Aorta (tissue), 5 donors: ENCODE measurements at regions of chr10 and their contacts with region 1.

Region 1: GRCh38 chr10:22988581-22989360 is 60.9 kb downstream of the ARMC3 start:
- DNase-seq: peak in 1 of 2 donors; percentile 46
- ATAC-seq: peak; percentile 88
- H3K4me3 ChIP-seq: no peak overlapping the region
- H3K27ac ChIP-seq: no peak overlapping the region
- H3K4me1 ChIP-seq: no peaks in the 10 kb centered on the region
- H3K27me3 ChIP-seq: peaks cover 0 to 1% of the 10 kb centered on the region in 2 donors

Region 2: GRCh38 chr10:22010973-22011408 is 977.8 kb before region 1 on chr10:
- intact Hi-C with region 1: loop called in 1 of 2 experiments (anchors 5 kb)
- DNase-seq: no peak
- ATAC-seq: no peak
- H3K4me3 ChIP-seq: no peak overlapping the region
- H3K27ac ChIP-seq: no peak overlapping the region
- H3K4me1 ChIP-seq: no peaks in the 10 kb centered on the region
- H3K27me3 ChIP-seq: no peaks in the 10 kb centered on the region

Region 3: DNA sequence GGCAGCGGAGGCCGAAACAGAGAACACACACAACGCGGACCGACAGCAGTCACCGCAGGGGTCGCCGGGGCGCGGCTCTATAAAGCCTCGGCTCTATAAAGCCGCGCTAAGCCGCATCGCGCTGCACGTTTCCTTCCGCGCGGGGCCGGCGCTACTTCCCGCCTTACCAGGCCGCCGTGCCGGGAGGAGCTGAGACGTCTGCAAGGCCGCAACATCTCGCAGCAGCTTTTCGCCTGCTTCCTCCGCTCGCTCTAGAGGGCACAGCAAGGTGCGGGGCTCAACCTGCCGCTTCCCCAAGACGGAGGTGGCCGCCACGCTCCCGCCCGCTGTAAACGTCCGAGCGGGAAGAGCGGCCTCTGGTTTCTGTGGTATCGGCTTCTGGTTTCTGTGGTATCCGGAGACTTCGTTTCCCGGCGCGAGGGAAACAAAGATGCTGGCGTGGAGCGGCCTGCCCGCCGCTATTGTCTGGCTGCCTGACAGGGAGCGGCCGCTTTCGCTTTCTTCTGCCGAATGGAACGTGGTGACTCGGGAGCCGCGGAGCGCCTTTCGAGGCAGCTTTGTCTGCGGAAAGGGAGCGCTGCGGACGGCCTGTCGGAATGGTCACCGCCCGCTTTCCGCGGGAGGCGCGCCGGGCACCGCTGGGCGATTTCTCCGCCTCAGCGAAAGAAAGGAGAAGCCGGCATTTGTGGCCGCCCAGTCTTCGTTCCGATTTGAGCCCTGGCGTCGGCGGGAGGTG is 551.7 kb before region 1 on chr10:
- intact Hi-C with region 1: loop called (anchors 10 kb)
- DNase-seq: peak; percentile 95 to 96
- ATAC-seq: peak; percentile 96
- H3K4me3 ChIP-seq: peak overlapping the region; percentile 78 to 81
- H3K27ac ChIP-seq: peak overlapping the region; percentile 68 to 85
- H3K4me1 ChIP-seq: no peaks in the 10 kb centered on the region
- H3K27me3 ChIP-seq: no peaks in the 10 kb centered on the region

Region 4: DNA sequence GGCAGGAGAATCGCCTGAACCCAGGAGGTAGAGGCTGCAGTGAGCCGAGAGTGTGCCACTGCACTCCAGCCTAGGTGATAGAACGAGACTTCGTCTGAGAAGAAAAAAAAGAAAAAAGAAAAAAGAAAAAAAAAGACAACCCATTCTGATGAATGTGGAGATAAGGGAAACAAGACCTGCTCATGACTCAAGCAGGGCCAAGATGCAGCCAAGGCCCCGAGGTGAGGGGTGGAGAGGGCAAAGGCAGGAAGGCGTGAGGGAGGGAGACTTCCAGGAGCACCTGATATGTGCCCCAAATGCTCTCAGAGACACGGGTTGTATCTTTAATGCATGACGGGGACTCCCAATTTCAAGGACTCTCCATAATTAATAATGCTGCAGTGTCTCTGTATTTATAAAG is 409.0 kb before region 1 on chr10:
- intact Hi-C with region 1: loop called in 1 of 2 experiments (anchors 5 kb)
- DNase-seq: no peak
- ATAC-seq: no peak
- H3K4me3 ChIP-seq: no peak overlapping the region
- H3K27ac ChIP-seq: no peak overlapping the region
- H3K4me1 ChIP-seq: no peaks in the 10 kb centered on the region
- H3K27me3 ChIP-seq: no peaks in the 10 kb centered on the region

Region 5: GRCh38 chr10:23067939-23068775 is 79.4 kb after region 1 on chr10:
- intact Hi-C with region 1: loop called (anchors 2 to 5 kb)
- DNase-seq: peak; percentile 81 to 91
- ATAC-seq: peak; percentile 84
- H3K4me3 ChIP-seq: no peak overlapping the region
- H3K27ac ChIP-seq: peak overlapping the region in 1 of 2 donors; percentile 23
- H3K4me1 ChIP-seq: peaks cover 0 to 4% of the 10 kb centered on the region in 2 donors
- H3K27me3 ChIP-seq: no peaks in the 10 kb centered on the region

Region 6: DNA sequence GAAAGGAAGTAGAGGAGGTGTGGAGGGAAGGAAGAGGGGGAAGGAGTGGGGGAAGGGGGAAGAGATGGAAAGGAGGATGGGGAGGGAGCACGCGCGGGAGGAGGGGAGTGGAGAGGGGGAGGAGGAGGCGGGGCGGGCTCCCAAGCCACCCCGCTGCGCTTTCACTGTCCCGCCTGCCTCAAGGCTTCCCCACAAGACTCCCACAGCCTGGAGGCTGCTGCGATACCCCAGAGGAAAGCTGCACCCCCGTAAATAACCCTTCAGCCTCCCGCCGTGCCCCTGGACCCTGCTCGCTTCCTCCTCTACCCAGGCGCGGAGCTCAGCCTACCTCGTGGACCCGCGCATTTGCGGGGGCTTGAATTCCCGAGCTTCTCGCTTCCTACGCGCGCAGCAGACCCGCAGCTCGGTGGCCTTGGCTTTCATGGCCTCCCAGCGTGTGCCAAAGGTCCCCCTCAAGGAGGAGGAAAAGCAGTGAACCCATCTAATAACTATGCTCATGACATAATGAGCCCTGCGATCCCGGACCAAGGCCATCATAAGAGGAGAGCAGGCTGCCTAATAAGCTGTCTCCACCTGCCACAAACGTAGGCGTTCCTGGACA is 355.6 kb after region 1 on chr10 and contains the start of gene C10orf67:
- intact Hi-C with region 1: no loop called
- DNase-seq: peak in 1 of 2 donors; percentile 67
- ATAC-seq: no peak
- H3K4me3 ChIP-seq: peak within 1 kb of the TSS; percentile 13 to 49
- H3K27ac ChIP-seq: no peak within 1 kb of the TSS
- H3K4me1 ChIP-seq: no peaks in the 10 kb centered on the region
- H3K27me3 ChIP-seq: no peaks in the 10 kb centered on the region
- total RNA-seq, gene C10orf67: not detected